Mammary epithelial cell (primary cell): ENCODE measurements at regions of chr16 and their contacts with region 1.

Region 1: DNA sequence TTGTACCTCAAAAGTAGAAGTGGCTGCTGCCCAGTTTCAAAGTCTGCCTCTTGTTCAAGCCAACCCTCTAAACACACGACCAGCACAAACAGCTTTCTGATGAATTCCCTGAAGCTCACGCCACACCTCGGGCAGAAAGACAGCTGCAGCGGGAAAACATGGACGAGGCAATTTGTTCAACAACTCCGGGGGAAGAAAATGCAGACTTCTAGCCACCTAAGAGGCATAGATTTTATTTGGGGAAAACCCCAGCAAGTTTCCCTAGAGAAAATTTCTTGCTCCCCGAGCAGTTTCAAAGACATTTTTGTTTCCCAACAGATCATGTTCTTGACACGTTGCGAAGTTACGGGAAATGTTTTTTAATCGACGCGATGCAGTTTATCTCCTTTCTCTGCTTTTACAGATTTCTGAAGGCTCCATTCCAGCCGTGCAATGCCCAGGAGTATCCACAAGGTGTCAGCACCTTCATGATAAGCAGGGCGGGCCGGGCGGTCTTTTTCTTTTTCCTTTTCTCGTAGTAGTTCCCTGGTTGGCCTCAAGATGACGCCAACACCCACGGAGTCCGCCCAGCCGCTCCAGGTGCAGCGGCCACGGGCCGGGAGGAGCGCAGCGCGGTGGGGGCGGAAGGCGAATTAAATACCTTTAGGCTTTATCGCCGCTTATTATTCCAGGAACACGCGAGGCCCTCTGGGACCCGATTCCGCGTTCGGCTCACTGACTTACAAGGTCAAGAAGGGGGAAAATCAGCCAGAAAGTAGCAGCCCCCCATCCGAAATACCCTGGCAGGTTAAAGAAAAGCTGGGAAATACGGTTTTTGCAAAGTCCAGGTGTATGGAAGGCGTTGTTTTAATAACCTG is 2.9 kb upstream of the FOXC2 start:
- DNase-seq: peak; percentile 81
- H3K4me3 ChIP-seq: peak overlapping the region; percentile 11 to 38 (median 12)
- H3K27ac ChIP-seq: no peak overlapping the region
- H3K4me1 ChIP-seq: peaks cover 11% of the 10 kb centered on the region
- H3K27me3 ChIP-seq: no peaks in the 10 kb centered on the region
- CTCF ChIP-seq: peak; percentile 100

Region 2: GRCh38 chr16:87017365-87018012 is 453.8 kb after region 1 on chr16:
- CTCF ChIA-PET with region 1: interaction called, 9 read pairs
- dilution Hi-C with region 1: no loop called
- in situ Hi-C with region 1: loop called in 1 of 2 experiments (anchors 5 kb)
- intact Hi-C with region 1: loop called (anchors 1 kb)
- DNase-seq: peak; percentile 94
- H3K4me3 ChIP-seq: no peak overlapping the region
- H3K27ac ChIP-seq: no peak overlapping the region
- H3K4me1 ChIP-seq: peaks cover 9% of the 10 kb centered on the region
- H3K27me3 ChIP-seq: no peaks in the 10 kb centered on the region
- CTCF ChIP-seq: peak; percentile 36 to 45

Region 3: DNA sequence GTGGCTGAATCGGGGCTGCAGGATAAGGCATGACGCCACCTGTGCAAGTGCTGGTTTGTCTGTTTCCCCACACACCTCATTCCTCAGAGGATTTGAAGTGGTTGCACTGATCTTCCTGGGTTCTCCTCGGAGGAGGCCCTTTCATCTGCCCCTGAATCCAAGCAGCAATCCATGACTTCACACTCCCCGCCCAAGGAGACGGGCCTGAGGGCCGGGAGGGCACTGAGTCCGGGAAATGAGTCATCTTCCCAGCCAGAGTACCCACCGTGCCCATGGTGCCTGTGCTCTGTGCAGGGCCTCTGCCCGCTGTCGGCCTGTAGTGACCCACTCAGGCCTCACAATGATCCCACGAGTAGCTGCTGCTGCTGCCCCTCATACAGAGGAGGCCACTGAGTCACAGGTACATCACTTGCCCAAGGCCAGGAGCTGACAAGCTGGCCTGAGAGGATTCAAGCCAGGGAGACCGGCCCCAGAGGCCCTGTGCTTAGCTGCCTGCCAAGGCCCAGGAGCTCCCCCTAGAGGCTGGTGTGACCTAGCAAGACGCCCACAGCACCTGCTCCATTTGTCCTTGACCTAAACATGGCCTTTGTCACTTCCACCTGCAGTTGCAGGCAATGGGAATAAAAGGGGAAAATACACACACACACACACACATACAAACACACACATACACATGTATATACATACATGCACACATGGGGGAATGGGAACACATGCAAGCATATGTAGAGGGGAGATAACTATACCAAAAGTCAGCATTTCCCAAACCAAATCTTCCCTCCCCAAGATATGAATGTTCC is 513.4 kb after region 1 on chr16:
- CTCF ChIA-PET with region 1: no interaction called
- dilution Hi-C with region 1: no loop called
- in situ Hi-C with region 1: no loop called
- intact Hi-C with region 1: loop called (anchors 1 kb)
- DNase-seq: peak; percentile 60
- H3K4me3 ChIP-seq: no peak overlapping the region
- H3K27ac ChIP-seq: no peak overlapping the region
- H3K4me1 ChIP-seq: peaks cover 5% of the 10 kb centered on the region
- H3K27me3 ChIP-seq: no peaks in the 10 kb centered on the region
- CTCF ChIP-seq: peak; percentile 89 to 90

Region 4: DNA sequence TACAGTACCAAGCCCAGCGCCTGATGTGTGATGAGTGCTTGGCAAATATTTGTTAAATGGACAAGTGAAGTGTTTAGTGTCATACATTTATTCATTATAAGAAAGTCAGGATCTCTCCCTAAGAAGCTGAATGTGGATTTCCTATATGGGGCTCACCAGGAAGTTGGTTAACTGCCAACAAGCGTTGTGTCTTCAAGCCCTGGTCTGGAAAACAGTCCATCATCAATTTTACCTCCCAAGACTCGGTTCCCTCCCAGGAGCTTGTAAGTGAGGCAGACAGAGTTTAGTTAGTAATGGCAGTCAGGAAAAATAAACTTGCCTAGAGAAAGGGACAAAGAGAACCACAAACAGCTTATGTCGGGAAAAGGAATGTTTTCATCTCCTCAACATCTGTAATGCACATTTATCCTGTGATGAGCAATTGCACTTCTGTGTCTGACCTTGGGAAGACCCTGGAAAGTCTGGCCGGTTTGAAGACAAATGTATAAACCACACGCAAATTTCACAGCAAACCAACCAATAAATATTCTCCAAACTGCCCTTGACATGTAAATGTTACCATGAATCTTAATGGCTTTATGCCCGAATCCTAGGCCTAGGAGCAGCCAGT is 725.1 kb after region 1 on chr16:
- CTCF ChIA-PET with region 1: interaction called, 5 read pairs
- dilution Hi-C with region 1: no loop called
- in situ Hi-C with region 1: loop called in 1 of 2 experiments (anchors 10 kb)
- intact Hi-C with region 1: loop called (anchors 2 kb)
- DNase-seq: no peak
- H3K4me3 ChIP-seq: no peak overlapping the region
- H3K27ac ChIP-seq: no peak overlapping the region
- H3K4me1 ChIP-seq: no peaks in the 10 kb centered on the region
- H3K27me3 ChIP-seq: no peaks in the 10 kb centered on the region
- CTCF ChIP-seq: no peak

Region 5: GRCh38 chr16:87636072-87636684 is 1072.5 kb after region 1 on chr16:
- CTCF ChIA-PET with region 1: no interaction called
- dilution Hi-C with region 1: no loop called
- in situ Hi-C with region 1: no loop called
- intact Hi-C with region 1: loop called (anchors 1 kb)
- DNase-seq: peak; percentile 69
- H3K4me3 ChIP-seq: no peak overlapping the region
- H3K27ac ChIP-seq: no peak overlapping the region
- H3K4me1 ChIP-seq: peaks cover 8% of the 10 kb centered on the region
- H3K27me3 ChIP-seq: peaks cover 3% of the 10 kb centered on the region
- CTCF ChIP-seq: peak; percentile 62 to 82